Activated CD8-positive, alpha-beta T cell treated with anti-CD3 and anti-CD28 coated beads, Interleukin-2, amount 10 ng/mL, durations not matched to agents 7 days and 5 days (primary cell): ENCODE measurements at regions of chr19 and their contacts with region 1.

Region 1: GRCh38 chr19:38335949-38336637 is 463 bp downstream of the CATSPERG start:
- DNase-seq: peak; percentile 96
- ATAC-seq: peak; percentile 83
- H3K4me3 Mint-ChIP-seq: peak overlapping the region; percentile 87
- H3K27ac Mint-ChIP-seq: peak overlapping the region; percentile 98
- H3K4me1 Mint-ChIP-seq: peaks cover 11% of the 10 kb centered on the region
- H3K27me3 Mint-ChIP-seq: no peaks in the 10 kb centered on the region

Region 2: DNA sequence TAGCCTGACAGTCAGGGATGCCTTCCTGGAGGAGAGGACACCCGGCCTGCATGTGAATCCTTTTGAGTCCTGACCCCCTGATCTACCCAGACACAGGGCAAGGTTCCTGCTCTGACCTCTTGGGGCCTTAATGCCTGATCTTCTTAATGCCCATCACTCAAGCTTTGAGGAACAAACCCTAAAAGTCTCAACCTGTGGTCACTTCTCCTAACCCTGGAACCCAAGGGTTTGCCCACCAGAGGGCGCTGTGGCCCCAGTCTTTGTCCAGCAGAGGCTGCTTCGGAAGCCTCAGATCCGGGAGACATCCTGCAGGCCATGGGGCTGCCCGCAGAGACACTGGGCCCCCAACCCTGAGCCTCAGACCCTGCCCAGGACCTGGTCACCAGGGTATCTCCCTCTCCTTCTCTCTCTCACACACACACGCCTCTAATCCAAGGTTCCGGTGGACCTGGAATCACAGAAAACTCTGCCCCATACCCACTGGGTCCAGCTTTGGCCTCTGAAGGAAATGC is 102.3 kb before region 1 on chr19:
- CTCF ChIA-PET with region 1: interaction called, 24 read pairs
- POLR2A ChIA-PET with region 1: no interaction called
- DNase-seq: peak; percentile 86
- ATAC-seq: peak; percentile 62
- H3K4me3 Mint-ChIP-seq: no peak overlapping the region
- H3K27ac Mint-ChIP-seq: no peak overlapping the region
- H3K4me1 Mint-ChIP-seq: peaks cover 8% of the 10 kb centered on the region
- H3K27me3 Mint-ChIP-seq: peaks cover 22% of the 10 kb centered on the region

Region 3: DNA sequence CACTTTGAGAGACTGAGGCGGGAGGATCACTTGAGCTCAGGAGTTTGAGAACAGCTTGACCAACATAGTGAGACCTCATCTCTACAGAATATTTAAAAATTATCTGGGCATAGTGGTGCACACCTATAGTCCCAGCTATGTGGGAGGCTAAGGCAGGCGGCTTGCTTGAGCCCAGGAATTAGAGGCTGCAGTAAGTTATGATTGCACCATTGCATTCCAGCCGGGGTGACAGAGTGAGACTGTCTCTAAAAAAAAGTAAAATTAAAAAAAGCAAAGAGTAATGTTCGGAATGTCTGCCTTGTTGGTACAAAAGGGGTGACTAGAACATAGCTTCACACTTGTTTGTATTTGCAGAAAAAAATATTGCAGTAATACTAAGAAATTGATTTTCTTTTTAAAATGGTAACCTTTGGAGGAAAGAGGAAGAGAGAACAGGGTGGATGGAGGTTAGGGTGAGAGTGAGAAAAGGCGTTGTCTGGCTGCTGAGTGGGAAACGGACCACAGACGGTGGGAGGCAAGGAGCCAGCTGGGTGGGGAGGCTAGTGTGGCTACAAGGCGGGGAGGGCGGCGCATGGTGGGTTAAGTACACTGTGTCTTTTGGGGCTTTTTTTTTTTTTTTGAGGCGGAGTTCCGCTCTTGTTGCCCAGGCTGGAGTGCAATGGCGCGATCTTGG is 90.1 kb before region 1 on chr19:
- CTCF ChIA-PET with region 1: interaction called, 23 read pairs
- POLR2A ChIA-PET with region 1: no interaction called
- DNase-seq: no peak
- ATAC-seq: no peak
- H3K4me3 Mint-ChIP-seq: no peak overlapping the region
- H3K27ac Mint-ChIP-seq: no peak overlapping the region
- H3K4me1 Mint-ChIP-seq: peaks cover 2% of the 10 kb centered on the region
- H3K27me3 Mint-ChIP-seq: no peaks in the 10 kb centered on the region

Region 4: GRCh38 chr19:38263689-38264485 is 72.2 kb before region 1 on chr19:
- CTCF ChIA-PET with region 1: interaction called, 22 read pairs
- POLR2A ChIA-PET with region 1: interaction called, 3 read pairs
- DNase-seq: peak; percentile 74
- ATAC-seq: peak; percentile 87
- H3K4me3 Mint-ChIP-seq: peak overlapping the region; percentile 74
- H3K27ac Mint-ChIP-seq: peak overlapping the region; percentile 86
- H3K4me1 Mint-ChIP-seq: peaks cover 26% of the 10 kb centered on the region
- H3K27me3 Mint-ChIP-seq: no peaks in the 10 kb centered on the region